ENCODE measurements at regions of chr10 and their contacts with region 1.

Region 1: GRCh38 chr10:119686439-119687191 is 35.4 kb downstream of the BAG3 start:
- DNase-seq: peak; percentile 41 to 91 (median 66)
- ATAC-seq: peak; percentile 89 to 92 (median 91)
- H3K4me3 ChIP-seq: peak overlapping the region in 1 of 2 donors; percentile 35
- H3K4me3 Mint-ChIP-seq: peak overlapping the region; percentile 58 to 72 (median 69)
- H3K27ac ChIP-seq: peak overlapping the region; percentile 21
- H3K27ac Mint-ChIP-seq: peak overlapping the region; percentile 76 to 83
- H3K4me1 ChIP-seq: peaks cover 0 to 12% of the 10 kb centered on the region in 2 experiments
- H3K4me1 Mint-ChIP-seq: peaks cover 5 to 24% (median 21%) of the 10 kb centered on the region in 3 donors
- H3K27me3 ChIP-seq: peaks cover 0 to 5% of the 10 kb centered on the region in 2 experiments
- H3K27me3 Mint-ChIP-seq: peaks cover 0 to 3% of the 10 kb centered on the region in 2 donors

Region 2: GRCh38 chr10:119703903-119704508 is 17.4 kb after region 1 on chr10:
- CTCF ChIA-PET with region 1: interaction called in 1 of 2 experiments, 7 read pairs
- POLR2A ChIA-PET with region 1: interaction called in 1 of 2 experiments, 10 read pairs
- DNase-seq: no peak
- ATAC-seq: peak in 1 of 4 experiments; percentile 31
- H3K4me3 ChIP-seq: no peak overlapping the region
- H3K4me3 Mint-ChIP-seq: peak overlapping the region in 2 of 3 donors; percentile 8 to 60
- H3K27ac ChIP-seq: no peak overlapping the region
- H3K27ac Mint-ChIP-seq: peak overlapping the region; percentile 52 to 75
- H3K4me1 ChIP-seq: peaks cover 0 to 7% of the 10 kb centered on the region in 2 experiments
- H3K4me1 Mint-ChIP-seq: peaks cover 11 to 39% (median 14%) of the 10 kb centered on the region in 3 donors
- H3K27me3 ChIP-seq: no peaks in the 10 kb centered on the region
- H3K27me3 Mint-ChIP-seq: peaks cover 0 to 3% of the 10 kb centered on the region in 2 donors

Region 3: GRCh38 chr10:119725828-119726675 is 39.4 kb after region 1 on chr10 and contains the start of gene INPP5F:
- CTCF ChIA-PET with region 1: interaction called in 1 of 2 experiments, 12 read pairs
- POLR2A ChIA-PET with region 1: interaction called in 1 of 2 experiments, 4 read pairs
- DNase-seq: peak; percentile 90 to 100 (median 96)
- ATAC-seq: peak; percentile 91 to 96 (median 92)
- H3K4me3 ChIP-seq: peak within 1 kb of the TSS; percentile 60 to 67
- H3K4me3 Mint-ChIP-seq: peak within 1 kb of the TSS; percentile 85 to 90 (median 88)
- H3K27ac ChIP-seq: peak within 1 kb of the TSS; percentile 52
- H3K27ac Mint-ChIP-seq: peak within 1 kb of the TSS; percentile 74 to 92
- H3K4me1 ChIP-seq: peaks cover 5 to 15% of the 10 kb centered on the region in 2 experiments
- H3K4me1 Mint-ChIP-seq: peaks cover 32 to 43% (median 34%) of the 10 kb centered on the region in 3 donors
- H3K27me3 ChIP-seq: no peaks in the 10 kb centered on the region
- H3K27me3 Mint-ChIP-seq: no peaks in the 10 kb centered on the region
- total RNA-seq, gene INPP5F: 7.3 to 13.7 (median 9.8) TPM